ENCODE measurements at regions of chr6 and their contacts with region 1.

Region 1: GRCh38 chr6:160063771-160064413 is 57.7 kb upstream of the SLC22A1 start:
- DNase-seq: peak; percentile 78 to 85
- ATAC-seq: peak; percentile 91 to 93
- H3K4me3 ChIP-seq: peak overlapping the region in 2 of 4 donors; percentile 23 to 42
- H3K27ac ChIP-seq: peak overlapping the region; percentile 95 to 98 (median 96)
- H3K4me1 ChIP-seq: peaks cover 20 to 39% of the 10 kb centered on the region in 2 donors
- H3K27me3 ChIP-seq: no peaks in the 10 kb centered on the region
- CTCF ChIP-seq: peak in 1 of 5 experiments; percentile 14
- POLR2A ChIP-seq: no peak

Region 2: GRCh38 chr6:159062564-159062945 is 1001.3 kb before region 1 on chr6:
- in situ Hi-C with region 1: no loop called
- intact Hi-C with region 1: no loop called
- DNase-seq: no peak
- ATAC-seq: no peak
- H3K4me3 ChIP-seq: no peak overlapping the region
- H3K27ac ChIP-seq: no peak overlapping the region
- H3K4me1 ChIP-seq: no peaks in the 10 kb centered on the region
- H3K27me3 ChIP-seq: no peaks in the 10 kb centered on the region
- CTCF ChIP-seq: no peak
- POLR2A ChIP-seq: no peak

Region 3: DNA sequence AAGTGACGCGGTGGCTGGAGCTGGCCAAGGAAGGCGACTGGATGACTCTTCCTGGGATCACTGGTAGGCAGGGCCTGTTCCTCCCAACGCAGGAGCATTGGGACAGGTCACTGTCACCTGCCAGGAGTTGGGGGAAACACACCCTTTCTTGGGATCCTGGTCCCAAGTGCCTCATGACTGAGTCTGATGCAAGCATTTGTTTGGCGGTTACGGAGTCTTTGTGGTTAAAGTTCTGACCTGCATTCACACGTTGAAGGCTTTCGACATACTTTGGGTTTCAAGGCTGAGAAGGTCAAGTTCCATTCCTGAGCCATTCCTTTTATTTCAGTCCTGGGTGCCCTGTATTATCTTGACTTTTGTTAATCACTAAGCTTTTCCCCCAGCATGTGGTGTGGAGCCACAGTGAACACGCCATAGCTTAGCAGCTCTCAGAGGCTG is 257.9 kb before region 1 on chr6:
- in situ Hi-C with region 1: no loop called
- intact Hi-C with region 1: no loop called
- DNase-seq: no peak
- ATAC-seq: no peak
- H3K4me3 ChIP-seq: no peak overlapping the region
- H3K27ac ChIP-seq: no peak overlapping the region
- H3K4me1 ChIP-seq: no peaks in the 10 kb centered on the region
- H3K27me3 ChIP-seq: no peaks in the 10 kb centered on the region
- CTCF ChIP-seq: no peak
- POLR2A ChIP-seq: no peak

Region 4: GRCh38 chr6:159904497-159904911 is 159.4 kb before region 1 on chr6:
- in situ Hi-C with region 1: no loop called
- intact Hi-C with region 1: no loop called
- DNase-seq: no peak
- ATAC-seq: no peak
- H3K4me3 ChIP-seq: no peak overlapping the region
- H3K27ac ChIP-seq: no peak overlapping the region
- H3K4me1 ChIP-seq: no peaks in the 10 kb centered on the region
- H3K27me3 ChIP-seq: peaks cover 0 to 3% (median 0%) of the 10 kb centered on the region in 3 donors
- CTCF ChIP-seq: no peak
- POLR2A ChIP-seq: no peak

Region 5: GRCh38 chr6:160024152-160024551 is 39.7 kb before region 1 on chr6:
- in situ Hi-C with region 1: no loop called
- intact Hi-C with region 1: loop called (anchors 1 kb)
- DNase-seq: peak; percentile 60 to 73
- ATAC-seq: peak; percentile 95
- H3K4me3 ChIP-seq: no peak overlapping the region
- H3K27ac ChIP-seq: peak overlapping the region; percentile 78 to 81 (median 80)
- H3K4me1 ChIP-seq: peaks cover 34 to 35% of the 10 kb centered on the region in 2 donors
- H3K27me3 ChIP-seq: no peaks in the 10 kb centered on the region
- CTCF ChIP-seq: no peak
- POLR2A ChIP-seq: no peak

Region 6: DNA sequence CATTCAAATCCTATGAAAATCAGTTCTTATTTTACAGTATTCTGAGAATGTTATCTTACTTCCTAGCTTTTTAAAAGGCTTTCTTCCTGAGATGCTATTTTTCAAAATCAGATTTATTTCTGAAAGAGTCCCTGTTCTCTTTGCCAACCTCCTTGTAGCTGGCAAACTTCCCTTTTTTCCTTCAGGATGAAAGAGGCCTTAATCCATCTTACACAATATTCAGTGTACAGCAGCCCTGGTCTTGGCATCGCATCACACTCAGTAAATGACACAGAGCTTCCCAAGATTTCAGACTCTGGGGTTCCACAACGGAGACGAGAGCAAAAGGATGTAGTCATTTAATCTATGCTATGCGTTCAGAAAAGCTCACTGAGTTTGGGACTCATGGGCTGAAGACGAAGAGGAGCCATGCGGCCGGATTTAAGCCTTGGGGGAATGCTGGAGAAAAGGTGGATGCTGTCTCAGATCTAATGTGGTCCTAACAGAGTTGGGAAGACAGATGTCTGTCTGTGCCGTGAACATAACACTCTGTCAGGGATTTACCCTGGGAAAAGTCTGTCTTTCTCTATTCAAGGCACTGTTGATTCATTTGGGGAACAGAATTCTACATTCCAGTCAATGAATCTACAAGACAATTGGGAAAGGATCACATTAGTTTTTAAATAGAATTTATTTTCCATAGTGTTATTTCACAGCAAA is 1826.4 kb after region 1 on chr6:
- in situ Hi-C with region 1: no loop called
- intact Hi-C with region 1: no loop called
- DNase-seq: no peak
- ATAC-seq: no peak
- H3K4me3 ChIP-seq: no peak overlapping the region
- H3K27ac ChIP-seq: no peak overlapping the region
- H3K4me1 ChIP-seq: no peaks in the 10 kb centered on the region
- H3K27me3 ChIP-seq: no peaks in the 10 kb centered on the region
- CTCF ChIP-seq: no peak
- POLR2A ChIP-seq: no peak